ENCODE measurements at regions of chr16 and their contacts with region 1.

Region 1: GRCh38 chr16:11797166-11797956 is at the start of gene ZC3H7A:
- DNase-seq: peak; percentile 96 to 97
- ATAC-seq: peak; percentile 82 to 86
- H3K4me3 ChIP-seq: peak within 1 kb of the TSS; percentile 90 to 96 (median 94)
- H3K27ac ChIP-seq: peak within 1 kb of the TSS; percentile 98 to 100 (median 99)
- H3K4me1 ChIP-seq: peaks cover 52 to 59% of the 10 kb centered on the region in 2 donors
- H3K27me3 ChIP-seq: no peaks in the 10 kb centered on the region
- CTCF ChIP-seq: peak; percentile 62 to 100 (median 99)
- POLR2A ChIP-seq: peak; percentile 94 to 97
- total RNA-seq, gene ZC3H7A: 33.9 to 41.7 (median 37.9) TPM

Region 2: GRCh38 chr16:10964039-10964890 is 833.1 kb before region 1 on chr16:
- in situ Hi-C with region 1: loop called in 1 of 4 experiments (anchors 25 kb)
- intact Hi-C with region 1: no loop called
- DNase-seq: peak; percentile 70 to 76
- ATAC-seq: peak; percentile 63 to 90
- H3K4me3 ChIP-seq: no peak overlapping the region
- H3K27ac ChIP-seq: peak overlapping the region; percentile 57 to 75 (median 69)
- H3K4me1 ChIP-seq: peaks cover 15 to 24% of the 10 kb centered on the region in 2 donors
- H3K27me3 ChIP-seq: no peaks in the 10 kb centered on the region
- CTCF ChIP-seq: peak; percentile 90 to 97 (median 94)
- POLR2A ChIP-seq: no peak

Region 3: GRCh38 chr16:11497851-11498289 is 299.5 kb before region 1 on chr16:
- in situ Hi-C with region 1: no loop called
- intact Hi-C with region 1: loop called (anchors 5 kb)
- DNase-seq: peak in 1 of 2 donors; percentile 59
- ATAC-seq: no peak
- H3K4me3 ChIP-seq: no peak overlapping the region
- H3K27ac ChIP-seq: peak overlapping the region; percentile 84 to 96 (median 92)
- H3K4me1 ChIP-seq: peaks cover 33 to 34% of the 10 kb centered on the region in 2 donors
- H3K27me3 ChIP-seq: no peaks in the 10 kb centered on the region
- CTCF ChIP-seq: no peak
- POLR2A ChIP-seq: no peak

Region 4: GRCh38 chr16:11675561-11676511 is 121.5 kb before region 1 on chr16:
- in situ Hi-C with region 1: no loop called
- intact Hi-C with region 1: loop called (anchors 2 kb)
- DNase-seq: peak; percentile 95 to 99
- ATAC-seq: peak; percentile 65 to 75
- H3K4me3 ChIP-seq: no peak overlapping the region
- H3K27ac ChIP-seq: peak overlapping the region; percentile 91 to 99 (median 97)
- H3K4me1 ChIP-seq: peaks cover 97 to 98% of the 10 kb centered on the region in 2 donors
- H3K27me3 ChIP-seq: no peaks in the 10 kb centered on the region
- CTCF ChIP-seq: peak in 1 of 5 experiments; percentile 29
- POLR2A ChIP-seq: peak; percentile 56 to 59

Region 5: GRCh38 chr16:11768849-11769248 is 28.5 kb before region 1 on chr16:
- in situ Hi-C with region 1: no loop called
- intact Hi-C with region 1: no loop called
- DNase-seq: no peak
- ATAC-seq: no peak
- H3K4me3 ChIP-seq: no peak overlapping the region
- H3K27ac ChIP-seq: no peak overlapping the region
- H3K4me1 ChIP-seq: no peaks in the 10 kb centered on the region
- H3K27me3 ChIP-seq: no peaks in the 10 kb centered on the region
- CTCF ChIP-seq: no peak
- POLR2A ChIP-seq: no peak

Region 6: DNA sequence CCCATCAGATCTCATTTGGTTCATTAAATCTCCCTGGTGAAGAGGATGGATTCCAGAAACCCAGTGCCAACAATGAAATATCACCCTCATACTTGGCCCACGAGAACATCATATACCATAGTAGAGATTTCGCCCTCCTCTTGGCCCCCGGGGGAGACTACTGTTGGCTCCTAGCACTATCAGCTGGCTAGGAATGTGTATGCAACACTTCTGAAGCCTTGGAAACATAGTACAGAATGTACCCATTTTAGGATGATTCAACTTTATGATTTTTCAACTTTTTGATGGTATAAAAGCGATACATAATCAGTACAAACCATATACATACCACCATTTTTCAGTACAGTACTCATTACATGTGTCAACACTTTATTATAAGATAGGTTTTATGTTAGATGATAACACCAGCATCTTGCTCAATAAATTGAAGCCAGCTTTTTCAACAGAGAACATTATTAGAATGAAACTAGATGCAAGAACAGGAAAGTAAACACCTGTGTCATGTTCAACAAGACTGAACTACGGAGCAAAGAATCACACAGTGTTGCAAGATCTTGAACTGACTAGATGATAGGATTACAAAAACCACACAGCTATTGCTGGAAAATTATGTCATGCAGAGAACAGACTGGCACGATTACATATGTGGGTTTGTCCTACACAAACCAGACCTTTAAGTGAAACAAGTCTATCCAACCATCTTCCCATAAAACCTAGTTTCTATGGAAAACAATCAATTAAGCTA is 36.8 kb after region 1 on chr16:
- in situ Hi-C with region 1: no loop called
- intact Hi-C with region 1: loop called (anchors 1 kb)
- DNase-seq: peak; percentile 50 to 69
- ATAC-seq: peak; percentile 97
- H3K4me3 ChIP-seq: no peak overlapping the region
- H3K27ac ChIP-seq: peak overlapping the region; percentile 84 to 89 (median 88)
- H3K4me1 ChIP-seq: peaks cover 11 to 24% of the 10 kb centered on the region in 2 donors
- H3K27me3 ChIP-seq: no peaks in the 10 kb centered on the region
- CTCF ChIP-seq: no peak
- POLR2A ChIP-seq: peak in 1 of 2 donors; percentile 15

Region 7: DNA sequence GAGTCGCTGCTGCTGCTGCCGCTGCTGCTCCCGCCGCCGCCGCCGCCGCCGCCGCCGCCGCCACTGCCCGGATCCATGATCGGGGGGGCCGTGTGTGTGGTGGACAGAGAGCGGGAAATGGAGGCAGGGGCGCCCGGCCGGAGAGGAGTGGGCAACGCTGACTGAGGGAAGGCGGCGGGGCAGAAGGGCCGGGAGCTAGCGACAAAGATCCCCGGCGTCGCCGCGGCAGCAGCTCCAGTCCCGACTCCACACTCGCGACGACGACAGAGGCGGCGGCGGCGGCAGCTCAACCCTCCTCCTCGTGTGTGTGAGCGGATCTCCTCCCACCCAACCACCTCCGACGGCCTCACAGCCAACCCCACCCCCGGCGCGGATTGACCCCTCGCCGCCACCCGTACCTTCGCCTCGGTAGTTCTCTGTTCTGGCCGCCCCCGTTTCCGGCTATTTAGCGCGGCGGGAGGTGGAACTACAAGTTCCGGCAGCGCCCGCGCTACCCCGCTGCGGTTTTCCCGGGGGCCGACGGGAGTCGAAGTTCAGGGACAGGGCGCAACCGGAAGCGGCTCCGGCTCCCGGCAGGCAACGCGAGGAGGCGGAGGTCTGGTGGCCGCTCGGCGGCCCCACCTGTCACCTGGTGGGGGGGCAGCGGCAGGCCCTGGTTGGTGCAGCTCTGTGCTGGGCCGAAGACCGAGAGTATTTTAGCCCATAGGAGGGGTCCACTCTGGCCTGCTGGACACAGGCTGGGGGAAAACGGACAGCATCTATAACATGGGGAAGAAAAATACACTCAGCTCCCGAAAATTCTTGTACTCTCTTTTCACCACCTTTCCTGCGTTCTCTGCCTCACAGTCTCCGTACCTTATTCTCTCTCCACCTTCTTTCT is 118.5 kb after region 1 on chr16 and contains the start of gene GSPT1:
- in situ Hi-C with region 1: loop called in 1 of 4 experiments (anchors 25 kb)
- intact Hi-C with region 1: loop called (anchors 1 kb)
- DNase-seq: peak; percentile 99
- ATAC-seq: peak; percentile 94 to 97
- H3K4me3 ChIP-seq: peak within 1 kb of the TSS; percentile 81 to 89 (median 84)
- H3K27ac ChIP-seq: peak within 1 kb of the TSS; percentile 92 to 99 (median 96)
- H3K4me1 ChIP-seq: peaks cover 29 to 34% of the 10 kb centered on the region in 2 donors
- H3K27me3 ChIP-seq: no peaks in the 10 kb centered on the region
- CTCF ChIP-seq: peak in 4 of 5 experiments; percentile 17 to 58 (median 24)
- POLR2A ChIP-seq: peak; percentile 93 to 96
- total RNA-seq, gene GSPT1: 86.9 to 169 (median 139) TPM

Region 8: GRCh38 chr16:12067714-12068401 is 270.5 kb after region 1 on chr16:
- in situ Hi-C with region 1: no loop called
- intact Hi-C with region 1: loop called (anchors 10 kb)
- DNase-seq: peak in 1 of 2 donors; percentile 46
- ATAC-seq: peak; percentile 80 to 84
- H3K4me3 ChIP-seq: no peak overlapping the region
- H3K27ac ChIP-seq: no peak overlapping the region
- H3K4me1 ChIP-seq: peaks cover 0 to 7% of the 10 kb centered on the region in 2 donors
- H3K27me3 ChIP-seq: no peaks in the 10 kb centered on the region
- CTCF ChIP-seq: peak; percentile 80 to 96 (median 91)
- POLR2A ChIP-seq: no peak